IMR-90 (cell line): ENCODE measurements at regions of chr15 and their contacts with region 1.

Region 1: GRCh38 chr15:60507596-60508424 is 28.9 kb upstream of the ICE2 start:
- DNase-seq: peak; percentile 77
- ATAC-seq: peak; percentile 98
- H3K4me3 ChIP-seq: no peak overlapping the region
- H3K27ac ChIP-seq: no peak overlapping the region
- H3K4me1 ChIP-seq: no peaks in the 10 kb centered on the region
- H3K27me3 ChIP-seq: no peaks in the 10 kb centered on the region
- CTCF ChIP-seq: peak; percentile 95
- POLR2A ChIP-seq: no peak
- RAD21 ChIP-seq: peak; percentile 87

Region 2: GRCh38 chr15:60541481-60542299 is 33.9 kb after region 1 on chr15:
- CTCF ChIA-PET with region 1: no interaction called
- POLR2A ChIA-PET with region 1: no interaction called
- dilution Hi-C with region 1: no loop called
- in situ Hi-C with region 1: no loop called
- intact Hi-C with region 1: no loop called
- DNase-seq: no peak
- ATAC-seq: no peak
- H3K4me3 ChIP-seq: no peak overlapping the region
- H3K27ac ChIP-seq: no peak overlapping the region
- H3K4me1 ChIP-seq: no peaks in the 10 kb centered on the region; the same call in 1 of the 2 replicates
- H3K27me3 ChIP-seq: no peaks in the 10 kb centered on the region
- CTCF ChIP-seq: no peak
- POLR2A ChIP-seq: no peak
- RAD21 ChIP-seq: no peak

Region 3: GRCh38 chr15:60551781-60552161 is 44.0 kb after region 1 on chr15:
- CTCF ChIA-PET with region 1: no interaction called
- POLR2A ChIA-PET with region 1: no interaction called
- dilution Hi-C with region 1: no loop called
- in situ Hi-C with region 1: no loop called
- intact Hi-C with region 1: no loop called
- DNase-seq: no peak
- ATAC-seq: no peak
- H3K4me3 ChIP-seq: no peak overlapping the region
- H3K27ac ChIP-seq: no peak overlapping the region
- H3K4me1 ChIP-seq: no peaks in the 10 kb centered on the region
- H3K27me3 ChIP-seq: no peaks in the 10 kb centered on the region
- CTCF ChIP-seq: no peak
- POLR2A ChIP-seq: no peak
- RAD21 ChIP-seq: no peak

Region 4: DNA sequence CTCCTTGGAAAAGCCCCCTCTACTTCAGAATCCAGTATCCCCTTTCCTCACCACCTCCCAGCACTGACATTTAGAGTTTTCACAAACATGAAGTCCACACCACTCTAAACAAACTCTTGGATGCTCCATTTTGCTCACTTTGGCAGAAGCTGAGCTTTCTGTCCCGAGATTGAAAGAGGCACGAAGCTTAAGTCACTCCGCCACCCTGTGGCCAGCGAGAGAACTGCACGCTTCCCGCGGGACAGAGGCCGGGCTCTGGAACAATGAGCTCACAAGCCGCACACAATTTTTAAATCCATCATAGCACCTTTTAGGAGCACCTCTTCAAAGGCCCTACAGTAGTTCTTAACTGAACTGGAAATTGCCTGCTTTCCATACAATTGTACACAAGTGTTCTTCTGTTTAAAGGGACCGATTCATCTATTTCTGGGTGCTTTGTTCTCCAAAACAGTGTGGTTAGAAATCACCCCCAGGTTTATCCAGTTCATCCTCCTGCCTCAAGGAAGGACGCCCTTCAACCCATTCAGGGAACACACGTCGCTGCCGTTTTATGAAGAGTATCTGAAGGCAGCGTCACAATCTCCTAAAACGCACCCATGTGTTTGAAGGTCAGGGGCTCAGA is 1326.4 kb after region 1 on chr15:
- CTCF ChIA-PET with region 1: interaction called, 4 read pairs
- POLR2A ChIA-PET with region 1: no interaction called
- dilution Hi-C with region 1: no loop called
- in situ Hi-C with region 1: loop called (anchors 25 kb)
- intact Hi-C with region 1: loop called (anchors 1 kb)
- DNase-seq: peak; percentile 72
- ATAC-seq: peak; percentile 89
- H3K4me3 ChIP-seq: no peak overlapping the region
- H3K27ac ChIP-seq: no peak overlapping the region
- H3K4me1 ChIP-seq: no peaks in the 10 kb centered on the region
- H3K27me3 ChIP-seq: peaks cover 14% of the 10 kb centered on the region
- CTCF ChIP-seq: peak; percentile 92
- POLR2A ChIP-seq: no peak
- RAD21 ChIP-seq: peak; percentile 78